ENCODE measurements at regions of chr21 and their contacts with region 1.

Region 1: DNA sequence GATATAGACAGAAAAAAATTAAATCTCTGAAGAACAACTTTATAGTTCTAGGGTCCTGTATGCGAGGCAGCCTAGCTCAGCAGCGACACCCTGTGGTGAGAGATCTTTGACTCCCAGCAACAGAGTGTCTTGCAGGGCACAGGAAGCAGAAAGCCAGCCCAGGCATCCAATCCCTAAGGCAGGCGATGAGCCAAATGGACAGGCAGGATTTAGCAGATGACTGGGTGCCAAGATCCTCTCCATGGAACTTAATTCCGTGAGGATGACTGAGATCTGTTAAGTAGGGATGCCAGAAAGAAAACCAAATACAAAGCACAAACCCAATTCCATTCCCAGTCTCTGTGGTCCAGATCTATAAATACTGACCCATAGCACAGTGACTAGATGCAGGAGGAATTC is 38.8 kb downstream of the HLCS start:
- DNase-seq: peak; percentile 50
- H3K4me3 Mint-ChIP-seq: no peak overlapping the region
- H3K27ac Mint-ChIP-seq: no peak overlapping the region
- H3K4me1 Mint-ChIP-seq: peaks cover 2% of the 10 kb centered on the region
- H3K27me3 Mint-ChIP-seq: no peaks in the 10 kb centered on the region

Region 2: GRCh38 chr21:36630485-36631206 is 297.1 kb before region 1 on chr21:
- intact Hi-C with region 1: loop called (anchors 5 kb)
- DNase-seq: peak; percentile 25
- H3K4me3 Mint-ChIP-seq: no peak overlapping the region
- H3K27ac Mint-ChIP-seq: no peak overlapping the region
- H3K4me1 Mint-ChIP-seq: no peaks in the 10 kb centered on the region
- H3K27me3 Mint-ChIP-seq: peaks cover 1% of the 10 kb centered on the region

Region 3: DNA sequence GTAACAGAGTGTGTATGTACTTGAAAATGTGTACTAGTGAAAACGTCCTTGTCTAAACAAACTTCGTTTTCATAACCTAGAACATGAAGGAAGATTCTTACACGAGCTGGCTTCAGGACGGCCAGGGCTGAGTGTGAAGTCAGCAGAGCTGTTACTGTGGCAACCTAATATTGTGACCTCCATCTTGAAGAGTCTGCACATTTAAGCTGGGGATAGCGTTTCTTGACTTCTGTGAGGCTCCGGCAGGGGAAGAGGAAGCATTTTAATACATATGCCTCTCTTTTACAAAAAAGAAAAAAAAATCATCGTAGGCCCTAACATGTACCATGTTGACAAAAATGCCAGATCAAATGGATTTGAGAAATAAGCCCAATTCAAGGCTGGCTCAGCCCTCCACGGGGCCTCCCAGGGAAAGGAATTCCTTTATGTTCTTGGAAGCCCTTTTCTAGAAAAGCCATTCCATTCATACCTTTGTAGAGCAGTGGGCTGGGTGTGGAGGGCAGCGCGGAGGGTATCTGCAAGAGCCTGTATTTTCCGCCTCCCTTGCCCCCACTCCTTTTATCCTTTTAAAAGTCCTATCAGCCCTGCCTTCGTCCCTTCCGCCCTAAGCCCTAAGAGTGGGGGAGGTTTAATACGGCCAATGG is 177.7 kb before region 1 on chr21:
- intact Hi-C with region 1: loop called (anchors 5 kb)
- DNase-seq: no peak
- H3K4me3 Mint-ChIP-seq: no peak overlapping the region
- H3K27ac Mint-ChIP-seq: no peak overlapping the region
- H3K4me1 Mint-ChIP-seq: peaks cover 3% of the 10 kb centered on the region
- H3K27me3 Mint-ChIP-seq: peaks cover 45% of the 10 kb centered on the region

Region 4: GRCh38 chr21:36825683-36826082 is 102.0 kb before region 1 on chr21:
- intact Hi-C with region 1: no loop called
- DNase-seq: no peak
- H3K4me3 Mint-ChIP-seq: no peak overlapping the region
- H3K27ac Mint-ChIP-seq: no peak overlapping the region
- H3K4me1 Mint-ChIP-seq: no peaks in the 10 kb centered on the region
- H3K27me3 Mint-ChIP-seq: no peaks in the 10 kb centered on the region